Mammary epithelial cell (primary cell): ENCODE measurements at regions of chr11 and their contacts with region 1.

Region 1: GRCh38 chr11:58286249-58286648 is 18.2 kb upstream of the OR10W1 start:
- DNase-seq: peak; percentile 40
- H3K4me3 ChIP-seq: no peak overlapping the region
- H3K27ac ChIP-seq: no peak overlapping the region
- H3K4me1 ChIP-seq: no peaks in the 10 kb centered on the region
- H3K27me3 ChIP-seq: no peaks in the 10 kb centered on the region
- CTCF ChIP-seq: peak; percentile 75 to 92

Region 2: DNA sequence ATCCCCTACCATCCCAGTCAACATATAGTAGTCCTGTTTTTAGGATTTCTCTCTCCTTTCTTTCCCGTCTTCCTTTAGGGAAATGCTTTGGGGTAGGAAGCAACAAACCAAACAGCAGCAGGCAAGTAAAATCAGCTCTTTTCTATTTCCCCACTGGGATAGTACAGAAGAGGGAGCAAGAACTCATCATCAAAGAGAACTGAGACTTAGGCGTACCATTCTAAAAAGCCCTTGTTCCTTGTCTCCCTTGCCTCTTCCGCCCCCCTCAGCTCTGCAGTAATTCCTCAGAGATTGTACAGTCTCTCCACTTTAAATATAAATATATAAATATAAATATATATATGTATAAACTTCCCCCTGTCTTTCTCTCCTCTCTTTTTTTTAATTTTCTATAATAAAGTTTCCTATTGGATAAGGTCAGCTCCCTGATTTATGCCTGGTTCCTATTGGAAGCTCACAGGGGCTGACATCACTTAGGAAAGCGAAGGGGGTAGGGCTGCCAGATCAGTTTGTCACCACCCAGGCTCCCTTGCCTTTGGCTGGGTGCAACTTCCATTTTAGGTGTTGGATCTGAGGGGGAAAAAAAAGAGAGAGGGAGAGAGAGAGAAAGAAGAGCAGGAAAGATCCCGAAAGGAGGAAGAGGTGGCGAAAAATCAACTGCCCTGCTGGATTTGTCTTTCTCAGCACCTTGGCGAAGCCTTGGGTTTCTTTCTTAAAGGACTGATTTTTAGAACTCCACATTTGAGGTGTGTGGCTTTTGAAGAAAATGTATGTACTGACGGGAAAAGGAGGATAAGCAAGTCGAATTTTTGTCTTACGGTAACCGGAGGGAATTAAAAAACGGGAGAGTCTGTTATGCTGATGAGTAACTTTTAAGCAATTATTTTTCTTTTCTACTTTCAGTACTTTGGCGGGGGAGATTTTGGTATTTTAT is 524.7 kb before region 1 on chr11 and contains the start of gene CTNND1:
- CTCF ChIA-PET with region 1: no interaction called
- dilution Hi-C with region 1: no loop called
- in situ Hi-C with region 1: no loop called
- intact Hi-C with region 1: loop called (anchors 5 kb)
- DNase-seq: peak; percentile 97
- H3K4me3 ChIP-seq: peak within 1 kb of the TSS; percentile 51 to 98 (median 93)
- H3K27ac ChIP-seq: peak within 1 kb of the TSS; percentile 98
- H3K4me1 ChIP-seq: peaks cover 23% of the 10 kb centered on the region
- H3K27me3 ChIP-seq: no peaks in the 10 kb centered on the region
- CTCF ChIP-seq: peak in 1 of 2 donors; percentile 10
- total RNA-seq, gene CTNND1: 164 to 212 TPM

Region 3: DNA sequence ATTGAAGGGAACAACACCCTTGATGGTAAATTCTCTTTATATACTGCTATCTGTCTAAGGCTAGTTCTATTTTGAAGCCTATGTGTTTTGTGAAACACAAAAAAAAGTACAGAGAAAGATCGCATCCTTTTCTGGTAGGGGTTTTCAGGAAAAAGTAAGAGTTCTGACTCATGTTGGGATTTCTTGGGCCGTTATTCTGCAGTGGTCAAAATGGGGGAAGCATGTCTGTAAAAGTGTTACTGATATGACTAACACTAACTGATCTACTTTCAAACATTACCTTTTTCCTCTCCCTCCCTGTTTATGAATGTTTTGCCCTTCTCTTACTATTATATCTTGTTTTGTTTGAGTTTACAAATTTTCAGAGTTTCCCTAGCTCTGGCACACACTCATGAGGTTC is 470.8 kb before region 1 on chr11:
- CTCF ChIA-PET with region 1: no interaction called
- dilution Hi-C with region 1: no loop called
- in situ Hi-C with region 1: loop called in 1 of 2 experiments (anchors 10 kb)
- intact Hi-C with region 1: loop called (anchors 1 kb)
- DNase-seq: no peak
- H3K4me3 ChIP-seq: no peak overlapping the region
- H3K27ac ChIP-seq: no peak overlapping the region
- H3K4me1 ChIP-seq: no peaks in the 10 kb centered on the region
- H3K27me3 ChIP-seq: no peaks in the 10 kb centered on the region
- CTCF ChIP-seq: no peak

Region 4: DNA sequence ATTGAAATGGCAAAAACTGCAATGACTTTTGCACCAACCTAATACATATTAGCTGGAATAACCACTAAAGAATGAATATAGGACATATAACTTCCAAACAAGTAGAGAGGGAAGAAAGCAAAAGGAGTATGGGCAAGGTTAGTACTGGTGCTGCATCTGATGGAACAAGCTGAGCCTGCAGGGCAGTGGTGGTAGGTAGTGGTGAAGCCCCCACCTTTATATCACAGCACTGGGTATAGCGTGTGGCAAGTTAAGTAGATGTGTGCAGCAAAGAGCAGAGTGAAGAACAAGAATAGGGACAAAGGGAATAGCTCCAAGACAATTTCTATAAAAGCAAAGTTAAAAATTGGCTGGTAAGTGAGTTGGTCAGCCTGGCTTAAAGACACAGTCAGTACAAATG is 462.4 kb before region 1 on chr11:
- CTCF ChIA-PET with region 1: interaction called, 8 read pairs
- dilution Hi-C with region 1: no loop called
- in situ Hi-C with region 1: loop called in 1 of 2 experiments (anchors 10 kb)
- intact Hi-C with region 1: no loop called
- DNase-seq: no peak
- H3K4me3 ChIP-seq: no peak overlapping the region
- H3K27ac ChIP-seq: no peak overlapping the region
- H3K4me1 ChIP-seq: no peaks in the 10 kb centered on the region
- H3K27me3 ChIP-seq: no peaks in the 10 kb centered on the region
- CTCF ChIP-seq: no peak

Region 5: DNA sequence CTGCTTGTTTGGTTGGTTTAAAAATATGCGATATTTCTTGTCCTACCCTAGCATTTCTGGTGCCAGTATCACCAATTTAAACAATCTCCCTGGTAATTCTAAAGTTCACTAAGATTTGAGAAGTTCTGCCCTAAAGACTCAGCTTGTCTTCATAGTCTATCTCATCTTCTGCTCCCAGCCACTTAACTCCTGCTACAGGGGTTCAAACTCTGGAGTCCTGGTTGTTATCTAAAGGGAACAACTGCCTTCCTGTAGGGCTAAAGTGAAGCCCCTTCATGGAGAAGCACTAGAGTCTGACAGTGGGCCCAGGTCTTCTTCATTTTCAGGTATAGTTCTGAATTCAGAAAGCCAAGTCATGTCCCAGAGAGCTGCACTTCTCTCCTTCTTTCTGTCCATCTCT is 451.4 kb before region 1 on chr11:
- CTCF ChIA-PET with region 1: interaction called, 3 read pairs
- dilution Hi-C with region 1: no loop called
- in situ Hi-C with region 1: no loop called
- intact Hi-C with region 1: loop called (anchors 5 kb)
- DNase-seq: no peak
- H3K4me3 ChIP-seq: no peak overlapping the region
- H3K27ac ChIP-seq: no peak overlapping the region
- H3K4me1 ChIP-seq: no peaks in the 10 kb centered on the region
- H3K27me3 ChIP-seq: no peaks in the 10 kb centered on the region
- CTCF ChIP-seq: no peak

Region 6: DNA sequence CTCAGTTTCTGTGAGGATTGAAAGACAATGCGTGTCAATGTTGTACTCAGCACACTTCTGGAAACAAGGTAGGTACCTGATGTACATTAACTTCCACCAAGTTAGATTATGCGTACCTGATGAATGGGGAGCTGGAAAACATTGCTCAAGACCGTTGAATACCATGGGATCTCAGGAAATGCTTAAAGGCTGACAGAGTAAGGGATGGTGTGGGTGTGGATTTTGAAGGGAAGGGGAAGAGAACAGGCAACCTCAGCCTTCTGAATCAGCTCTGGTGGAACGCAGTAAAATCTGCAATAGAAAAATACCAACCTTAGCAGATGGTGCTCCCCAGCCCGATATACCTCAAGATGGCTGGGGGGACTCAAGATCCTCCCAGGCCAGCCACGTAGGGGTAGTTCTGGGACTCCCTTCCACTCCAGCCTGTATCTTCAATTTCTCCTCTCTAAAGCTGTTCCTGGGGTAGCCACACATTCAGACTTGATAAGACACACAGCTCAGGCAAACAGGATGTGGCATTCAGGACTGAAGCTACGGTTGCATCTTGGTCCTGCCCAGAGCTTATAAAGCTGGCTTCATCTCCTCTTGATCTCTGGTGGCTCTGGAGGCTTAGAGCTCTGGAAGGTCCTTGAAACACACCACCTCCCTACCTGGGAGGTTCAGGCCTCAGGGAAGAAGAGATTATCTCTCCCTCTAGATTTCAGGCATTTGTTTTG is 412.9 kb before region 1 on chr11:
- CTCF ChIA-PET with region 1: no interaction called
- dilution Hi-C with region 1: no loop called
- in situ Hi-C with region 1: loop called in 1 of 2 experiments (anchors 25 kb)
- intact Hi-C with region 1: no loop called
- DNase-seq: peak; percentile 70
- H3K4me3 ChIP-seq: no peak overlapping the region
- H3K27ac ChIP-seq: peak overlapping the region; percentile 20
- H3K4me1 ChIP-seq: peaks cover 8% of the 10 kb centered on the region
- H3K27me3 ChIP-seq: no peaks in the 10 kb centered on the region
- CTCF ChIP-seq: no peak

Region 7: GRCh38 chr11:58179648-58180047 is 106.6 kb before region 1 on chr11:
- CTCF ChIA-PET with region 1: no interaction called
- dilution Hi-C with region 1: no loop called
- in situ Hi-C with region 1: no loop called
- intact Hi-C with region 1: no loop called
- DNase-seq: no peak
- H3K4me3 ChIP-seq: no peak overlapping the region
- H3K27ac ChIP-seq: no peak overlapping the region
- H3K4me1 ChIP-seq: no peaks in the 10 kb centered on the region
- H3K27me3 ChIP-seq: no peaks in the 10 kb centered on the region
- CTCF ChIP-seq: no peak